ENCODE measurements at regions of chr19 and their contacts with region 1.

Region 1: DNA sequence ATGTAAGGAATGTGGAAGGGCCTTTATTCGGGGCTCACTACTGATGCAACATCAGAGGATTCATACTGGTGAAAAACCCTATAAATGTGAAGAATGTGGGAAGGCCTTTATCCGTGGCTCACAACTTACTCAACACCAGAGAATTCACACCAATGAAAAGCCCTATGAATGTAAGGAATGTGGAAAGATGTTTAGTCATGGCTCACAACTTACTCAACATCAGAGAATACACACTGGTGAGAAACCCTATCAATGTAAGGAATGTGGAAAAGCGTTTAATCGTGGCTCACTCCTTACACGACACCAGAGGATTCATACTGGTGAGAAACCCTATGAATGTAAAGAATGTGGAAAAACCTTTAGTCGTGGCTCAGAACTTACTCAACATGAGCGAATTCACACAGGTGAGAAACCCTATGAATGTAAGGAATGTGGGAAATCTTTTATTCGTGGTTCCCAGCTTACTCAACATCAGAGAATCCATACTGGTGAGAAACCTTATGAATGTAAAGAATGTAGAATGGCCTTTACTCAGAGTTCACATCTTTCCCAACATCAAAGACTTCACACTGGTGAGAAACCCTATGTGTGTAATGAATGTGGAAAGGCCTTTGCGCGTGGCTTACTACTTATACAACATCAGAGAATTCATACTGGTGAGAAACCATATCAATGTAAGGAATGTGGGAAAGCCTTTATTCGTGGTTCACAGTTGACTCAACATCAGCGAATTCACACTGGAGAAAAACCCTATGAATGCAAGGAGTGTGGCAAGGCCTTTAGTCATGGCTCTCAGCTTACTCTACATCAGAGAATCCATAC is 44.3 kb downstream of the ZNF585A start:
- DNase-seq: no peak
- H3K4me3 ChIP-seq: no peak overlapping the region
- H3K27ac ChIP-seq: no peak overlapping the region
- H3K4me1 ChIP-seq: no peaks in the 10 kb centered on the region
- H3K27me3 ChIP-seq: no peaks in the 10 kb centered on the region
- CTCF ChIP-seq: no peak
- POLR2A ChIP-seq: no peak

Region 2: GRCh38 chr19:36646746-36647145 is 481.5 kb before region 1 on chr19:
- intact Hi-C with region 1: loop called (anchors 10 kb)
- DNase-seq: no peak
- H3K4me3 ChIP-seq: no peak overlapping the region
- H3K27ac ChIP-seq: no peak overlapping the region
- H3K4me1 ChIP-seq: no peaks in the 10 kb centered on the region
- H3K27me3 ChIP-seq: no peaks in the 10 kb centered on the region
- CTCF ChIP-seq: no peak
- POLR2A ChIP-seq: no peak

Region 3: DNA sequence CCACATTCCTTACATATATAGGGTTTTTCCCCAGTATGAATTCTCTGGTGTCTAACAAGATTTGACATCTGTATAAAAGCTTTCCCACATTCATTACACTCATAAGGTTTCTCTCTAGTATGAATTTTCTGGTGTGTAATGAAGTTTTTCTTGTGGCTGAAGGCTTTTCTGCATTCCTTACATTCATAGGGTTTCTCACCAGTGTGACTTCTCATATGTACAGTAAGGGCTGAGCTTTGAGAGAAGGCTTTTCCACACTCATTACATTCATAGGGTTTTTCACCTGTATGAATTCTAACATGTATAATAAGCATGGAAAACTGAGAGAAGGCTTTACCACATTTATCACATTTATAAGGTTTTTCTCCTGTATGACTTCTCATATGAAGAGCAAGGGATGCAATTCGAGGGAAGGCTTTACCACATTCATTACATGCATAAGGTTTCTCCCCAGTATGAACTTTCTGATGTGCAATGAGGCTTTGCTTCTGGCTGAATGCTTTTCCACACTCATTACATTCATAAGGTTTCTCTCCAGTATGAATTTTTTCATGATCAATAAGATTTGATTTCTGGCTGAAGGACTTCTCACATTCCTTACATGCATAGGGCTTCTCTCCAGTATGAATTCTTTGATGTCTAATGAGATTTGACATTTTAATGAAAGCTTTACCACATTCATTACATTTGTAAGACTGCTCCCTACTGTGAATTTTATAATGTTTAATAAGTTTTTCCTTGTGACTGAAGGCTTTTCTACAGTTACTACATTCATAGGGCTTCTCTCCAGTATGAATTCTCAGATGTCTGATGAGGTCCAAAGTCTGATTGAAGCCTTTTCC is 285.3 kb after region 1 on chr19:
- intact Hi-C with region 1: no loop called
- DNase-seq: no peak
- H3K4me3 ChIP-seq: no peak overlapping the region
- H3K27ac ChIP-seq: no peak overlapping the region
- H3K4me1 ChIP-seq: no peaks in the 10 kb centered on the region
- H3K27me3 ChIP-seq: no peaks in the 10 kb centered on the region
- CTCF ChIP-seq: no peak
- POLR2A ChIP-seq: no peak

Measured in thyroid gland (tissue), 4 donors.